ENCODE measurements at regions of chr15 and their contacts with region 1.

Region 1: GRCh38 chr15:68672781-68673205 is 94.0 kb downstream of the CORO2B start:
- DNase-seq: no peak
- ATAC-seq: no peak
- H3K4me3 ChIP-seq: no peak overlapping the region
- H3K4me3 Mint-ChIP-seq: no peak overlapping the region
- H3K27ac ChIP-seq: no peak overlapping the region
- H3K27ac Mint-ChIP-seq: no peak overlapping the region
- H3K4me1 ChIP-seq: peaks cover 10 to 14% of the 10 kb centered on the region in 2 donors
- H3K4me1 Mint-ChIP-seq: peaks cover 12% of the 10 kb centered on the region
- H3K27me3 ChIP-seq: peaks cover 0 to 12% (median 0%) of the 10 kb centered on the region in 4 experiments
- H3K27me3 Mint-ChIP-seq: peaks cover 19% of the 10 kb centered on the region
- CTCF ChIP-seq: no peak

Region 2: DNA sequence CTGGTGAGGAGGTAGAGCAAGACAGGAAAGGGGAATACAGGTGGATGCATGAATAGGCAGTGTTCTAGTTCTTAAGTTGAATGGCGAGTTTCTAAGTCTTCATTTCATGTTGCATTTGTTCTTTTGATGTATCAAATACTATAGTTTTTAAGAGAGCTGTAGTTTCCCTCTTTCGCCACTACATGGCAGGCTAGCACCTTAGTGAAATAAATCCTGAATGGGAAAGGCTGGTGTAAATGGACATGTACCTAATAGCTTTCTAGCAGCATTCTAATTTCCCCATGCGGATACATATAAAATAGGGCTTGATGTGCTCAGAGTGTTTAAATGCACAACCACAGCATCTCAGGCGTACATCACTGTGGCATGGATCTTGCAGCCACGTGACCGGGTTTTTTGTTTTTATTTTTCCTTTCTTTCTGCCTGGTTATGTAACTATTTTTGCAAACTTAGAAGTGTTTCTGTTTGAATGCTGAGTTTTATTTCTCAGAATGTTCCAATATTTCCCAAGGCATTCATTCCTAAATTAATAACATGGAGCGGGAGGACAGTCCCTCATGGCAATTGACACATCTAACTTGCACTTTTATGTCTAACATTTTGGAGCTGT is 419.8 kb before region 1 on chr15:
- CTCF ChIA-PET with region 1: interaction called, 16 read pairs
- POLR2A ChIA-PET with region 1: no interaction called
- intact Hi-C with region 1: loop called (anchors 2 kb)
- DNase-seq: peak; percentile 62
- ATAC-seq: peak; percentile 65
- H3K4me3 ChIP-seq: no peak overlapping the region
- H3K4me3 Mint-ChIP-seq: no peak overlapping the region
- H3K27ac ChIP-seq: no peak overlapping the region
- H3K27ac Mint-ChIP-seq: no peak overlapping the region
- H3K4me1 ChIP-seq: peaks cover 10 to 12% of the 10 kb centered on the region in 2 donors
- H3K4me1 Mint-ChIP-seq: peaks cover 4% of the 10 kb centered on the region
- H3K27me3 ChIP-seq: peaks cover 0 to 17% (median 6%) of the 10 kb centered on the region in 4 experiments
- H3K27me3 Mint-ChIP-seq: peaks cover 17% of the 10 kb centered on the region
- CTCF ChIP-seq: peak; percentile 91

Region 3: GRCh38 chr15:68550481-68551295 is 122.1 kb before region 1 on chr15:
- CTCF ChIA-PET with region 1: interaction called, 409 read pairs
- POLR2A ChIA-PET with region 1: no interaction called
- intact Hi-C with region 1: loop called (anchors 1 kb)
- DNase-seq: peak; percentile 80
- ATAC-seq: peak; percentile 58
- H3K4me3 ChIP-seq: no peak overlapping the region
- H3K4me3 Mint-ChIP-seq: no peak overlapping the region
- H3K27ac ChIP-seq: no peak overlapping the region
- H3K27ac Mint-ChIP-seq: no peak overlapping the region
- H3K4me1 ChIP-seq: no peaks in the 10 kb centered on the region
- H3K4me1 Mint-ChIP-seq: no peaks in the 10 kb centered on the region
- H3K27me3 ChIP-seq: peaks cover 0 to 25% (median 12%) of the 10 kb centered on the region in 4 experiments
- H3K27me3 Mint-ChIP-seq: peaks cover 46% of the 10 kb centered on the region
- CTCF ChIP-seq: peak; percentile 92

Region 4: DNA sequence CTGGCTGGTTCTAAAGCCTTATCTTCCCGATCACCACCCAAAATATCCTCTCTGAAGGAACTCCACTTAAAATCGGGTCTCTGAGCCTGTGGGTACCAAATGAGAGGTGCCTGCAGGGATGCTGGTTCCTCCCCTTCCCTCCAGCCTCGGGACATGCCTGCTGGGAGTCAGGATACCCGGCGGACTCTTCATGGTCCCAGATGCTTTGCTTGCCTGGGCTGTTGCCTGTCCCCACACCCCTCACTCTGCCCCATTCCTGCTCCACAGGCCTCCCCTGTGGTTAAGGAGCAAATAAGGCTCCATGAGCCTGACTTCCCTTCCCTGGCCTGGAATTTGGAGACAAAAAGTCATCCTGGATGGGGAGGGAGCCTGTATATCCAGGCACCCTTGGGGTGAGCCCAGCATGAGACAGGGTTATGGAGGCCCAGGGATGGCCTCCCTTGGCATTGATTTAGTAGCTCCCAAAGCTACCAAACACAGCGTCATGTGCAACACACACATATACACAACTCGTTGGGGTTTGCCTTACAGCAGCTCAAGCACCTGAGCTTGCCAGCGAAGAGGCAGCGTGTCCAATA is 106.3 kb before region 1 on chr15:
- CTCF ChIA-PET with region 1: interaction called, 178 read pairs
- POLR2A ChIA-PET with region 1: no interaction called
- intact Hi-C with region 1: no loop called
- DNase-seq: no peak
- ATAC-seq: no peak
- H3K4me3 ChIP-seq: no peak overlapping the region
- H3K4me3 Mint-ChIP-seq: no peak overlapping the region
- H3K27ac ChIP-seq: no peak overlapping the region
- H3K27ac Mint-ChIP-seq: no peak overlapping the region
- H3K4me1 ChIP-seq: peaks cover 4 to 5% of the 10 kb centered on the region in 2 donors
- H3K4me1 Mint-ChIP-seq: peaks cover 4% of the 10 kb centered on the region
- H3K27me3 ChIP-seq: peaks cover 0 to 13% (median 2%) of the 10 kb centered on the region in 4 experiments
- H3K27me3 Mint-ChIP-seq: peaks cover 28% of the 10 kb centered on the region
- CTCF ChIP-seq: no peak

Region 5: DNA sequence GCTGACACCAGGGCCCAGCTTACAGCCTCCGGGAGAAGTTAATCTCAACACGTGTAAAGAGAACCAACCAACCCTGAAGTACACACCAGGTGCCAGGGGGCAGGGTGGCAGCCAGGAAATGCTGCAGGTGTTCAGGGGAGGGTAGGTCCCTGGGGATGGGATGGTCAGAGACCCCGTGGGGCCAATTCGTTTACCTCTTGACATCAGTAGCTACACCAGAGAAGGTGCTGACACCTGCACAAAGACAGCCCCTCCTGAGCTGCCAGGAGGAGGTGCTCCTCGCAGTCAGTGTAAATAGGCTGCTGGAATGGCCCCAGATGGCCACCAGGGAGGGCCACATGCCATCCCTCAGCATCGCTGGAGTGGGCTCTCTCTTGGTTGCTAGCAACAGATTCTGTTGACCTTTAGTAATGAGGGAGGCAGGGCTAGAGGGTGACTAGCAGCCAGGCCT is 41.2 kb before region 1 on chr15:
- CTCF ChIA-PET with region 1: interaction called, 117 read pairs
- POLR2A ChIA-PET with region 1: interaction called, 5 read pairs
- intact Hi-C with region 1: loop called (anchors 2 kb)
- DNase-seq: peak; percentile 90
- ATAC-seq: peak; percentile 81
- H3K4me3 ChIP-seq: no peak overlapping the region
- H3K4me3 Mint-ChIP-seq: peak overlapping the region; percentile 80
- H3K27ac ChIP-seq: peak overlapping the region; percentile 86 to 95
- H3K27ac Mint-ChIP-seq: peak overlapping the region; percentile 97
- H3K4me1 ChIP-seq: peaks cover 96 to 98% of the 10 kb centered on the region in 2 donors
- H3K4me1 Mint-ChIP-seq: peaks cover 98% of the 10 kb centered on the region
- H3K27me3 ChIP-seq: no peaks in the 10 kb centered on the region
- H3K27me3 Mint-ChIP-seq: peaks cover 9% of the 10 kb centered on the region
- CTCF ChIP-seq: peak; percentile 21

Region 6: GRCh38 chr15:68650901-68651709 is 21.7 kb before region 1 on chr15:
- CTCF ChIA-PET with region 1: interaction called, 37 read pairs
- POLR2A ChIA-PET with region 1: no interaction called
- intact Hi-C with region 1: no loop called
- DNase-seq: peak; percentile 65
- ATAC-seq: peak; percentile 58
- H3K4me3 ChIP-seq: no peak overlapping the region
- H3K4me3 Mint-ChIP-seq: no peak overlapping the region
- H3K27ac ChIP-seq: no peak overlapping the region
- H3K27ac Mint-ChIP-seq: no peak overlapping the region
- H3K4me1 ChIP-seq: no peaks in the 10 kb centered on the region
- H3K4me1 Mint-ChIP-seq: no peaks in the 10 kb centered on the region
- H3K27me3 ChIP-seq: peaks cover 0 to 6% (median 0%) of the 10 kb centered on the region in 4 experiments
- H3K27me3 Mint-ChIP-seq: peaks cover 8% of the 10 kb centered on the region
- CTCF ChIP-seq: peak; percentile 77

Region 7: GRCh38 chr15:68732471-68732870 is 59.7 kb after region 1 on chr15:
- CTCF ChIA-PET with region 1: no interaction called
- POLR2A ChIA-PET with region 1: no interaction called
- intact Hi-C with region 1: no loop called
- DNase-seq: no peak
- ATAC-seq: no peak
- H3K4me3 ChIP-seq: no peak overlapping the region
- H3K4me3 Mint-ChIP-seq: no peak overlapping the region
- H3K27ac ChIP-seq: no peak overlapping the region
- H3K27ac Mint-ChIP-seq: no peak overlapping the region
- H3K4me1 ChIP-seq: peaks cover 24 to 34% of the 10 kb centered on the region in 2 donors
- H3K4me1 Mint-ChIP-seq: peaks cover 32% of the 10 kb centered on the region
- H3K27me3 ChIP-seq: no peaks in the 10 kb centered on the region
- H3K27me3 Mint-ChIP-seq: no peaks in the 10 kb centered on the region
- CTCF ChIP-seq: no peak

Region 8: DNA sequence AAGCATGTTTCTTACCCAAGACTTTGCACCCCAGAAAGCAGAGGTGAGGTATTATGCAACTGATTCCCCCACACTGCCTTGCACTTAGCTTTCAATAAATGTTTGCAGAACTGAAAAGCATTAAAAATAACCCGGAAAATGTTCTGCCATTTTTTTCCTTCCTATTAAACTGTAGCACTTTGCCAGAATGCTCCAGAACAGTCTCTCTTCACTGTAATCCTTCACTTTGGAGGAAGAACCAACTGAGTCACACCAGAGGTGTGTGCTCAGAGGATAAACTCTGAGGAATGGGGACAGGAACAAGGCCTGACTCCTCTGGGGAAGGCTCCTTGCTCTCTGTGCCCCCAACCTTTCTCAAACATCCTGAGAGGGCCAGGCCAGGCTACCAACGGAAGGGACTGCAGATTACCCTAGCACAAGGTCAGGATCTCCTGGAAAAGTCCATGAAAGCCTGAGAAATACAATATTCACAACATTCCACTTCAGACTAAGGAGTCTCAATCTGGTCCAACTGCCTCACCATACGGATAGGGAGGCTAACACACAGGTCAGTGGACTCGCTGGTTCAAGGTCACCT is 128.9 kb after region 1 on chr15:
- CTCF ChIA-PET with region 1: no interaction called
- POLR2A ChIA-PET with region 1: no interaction called
- intact Hi-C with region 1: no loop called
- DNase-seq: no peak
- ATAC-seq: no peak
- H3K4me3 ChIP-seq: no peak overlapping the region
- H3K4me3 Mint-ChIP-seq: no peak overlapping the region
- H3K27ac ChIP-seq: peak overlapping the region in 1 of 2 donors; percentile 37
- H3K27ac Mint-ChIP-seq: no peak overlapping the region
- H3K4me1 ChIP-seq: peaks cover 15 to 35% of the 10 kb centered on the region in 2 donors
- H3K4me1 Mint-ChIP-seq: peaks cover 84% of the 10 kb centered on the region
- H3K27me3 ChIP-seq: no peaks in the 10 kb centered on the region
- H3K27me3 Mint-ChIP-seq: no peaks in the 10 kb centered on the region
- CTCF ChIP-seq: no peak

Region 9: DNA sequence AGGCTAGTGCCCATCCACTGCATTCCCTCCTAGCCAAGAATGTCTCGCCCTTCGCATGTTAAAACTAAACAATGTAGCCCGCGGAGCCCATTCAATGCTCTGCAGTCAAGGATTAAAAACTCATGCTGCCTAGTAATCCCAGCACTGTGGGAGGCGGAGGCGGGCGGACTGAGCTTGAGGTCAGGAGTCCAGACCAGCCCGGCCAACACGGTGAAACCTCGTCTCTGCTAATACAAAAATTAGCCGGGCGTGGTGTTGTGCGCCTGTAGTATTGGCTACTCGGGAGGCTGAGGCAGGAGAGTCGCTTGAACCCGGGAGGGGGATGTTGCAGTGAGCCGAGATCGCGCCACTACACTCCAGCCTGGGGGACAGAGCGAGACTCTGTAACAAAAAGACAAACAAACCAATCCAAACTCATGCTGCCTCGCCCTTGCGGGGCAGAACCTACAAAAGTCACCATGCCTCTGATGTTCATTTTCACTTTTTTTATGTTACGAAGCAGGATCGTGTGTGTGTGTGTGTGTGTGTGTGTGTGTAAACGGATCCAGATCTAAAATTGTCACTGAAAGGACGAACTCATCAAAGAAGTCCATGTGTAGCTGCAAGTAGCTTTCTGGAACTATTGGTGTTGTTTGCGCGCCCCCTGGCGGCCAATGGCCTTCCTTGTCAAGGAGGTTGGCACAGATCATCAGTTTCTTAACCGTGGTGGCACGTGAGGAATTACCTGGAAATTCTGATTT is 202.8 kb after region 1 on chr15:
- CTCF ChIA-PET with region 1: interaction called, 54 read pairs
- POLR2A ChIA-PET with region 1: no interaction called
- intact Hi-C with region 1: loop called (anchors 1 kb)
- DNase-seq: peak; percentile 90
- ATAC-seq: peak; percentile 75
- H3K4me3 ChIP-seq: no peak overlapping the region
- H3K4me3 Mint-ChIP-seq: peak overlapping the region; percentile 50
- H3K27ac ChIP-seq: no peak overlapping the region
- H3K27ac Mint-ChIP-seq: no peak overlapping the region
- H3K4me1 ChIP-seq: peaks cover 4% of the 10 kb centered on the region in 2 donors
- H3K4me1 Mint-ChIP-seq: peaks cover 3% of the 10 kb centered on the region
- H3K27me3 ChIP-seq: peaks cover 0 to 16% (median 8%) of the 10 kb centered on the region in 4 experiments
- H3K27me3 Mint-ChIP-seq: peaks cover 19% of the 10 kb centered on the region
- CTCF ChIP-seq: peak; percentile 85

Region 10: DNA sequence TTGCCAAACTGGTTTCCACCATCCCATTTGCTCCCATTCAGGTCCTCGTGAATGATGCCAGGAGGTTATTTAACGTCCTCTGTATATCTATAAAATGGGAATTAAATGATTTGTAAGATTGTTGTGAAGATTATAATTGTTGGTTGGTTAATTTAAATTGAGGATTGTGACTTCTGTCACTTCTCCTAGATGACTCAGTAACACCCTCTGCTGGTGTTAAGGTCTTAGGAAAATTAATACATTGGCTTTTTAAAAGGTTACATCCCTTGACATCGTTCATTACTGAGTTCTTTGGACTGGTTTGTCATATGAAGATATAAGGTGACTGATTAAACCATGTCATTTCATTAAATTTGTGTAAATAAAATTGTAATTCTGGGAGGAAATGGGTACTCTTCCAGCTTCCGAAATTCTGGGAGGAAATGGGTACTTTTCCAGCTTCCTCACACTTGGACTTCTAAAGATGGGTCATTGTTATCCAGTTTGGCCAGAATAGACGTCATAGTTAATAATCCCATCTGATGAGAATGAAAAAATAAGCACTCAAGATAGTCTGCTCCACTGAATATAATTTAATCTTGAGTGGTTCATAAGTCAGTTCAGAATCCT is 592.7 kb after region 1 on chr15:
- CTCF ChIA-PET with region 1: no interaction called
- POLR2A ChIA-PET with region 1: no interaction called
- intact Hi-C with region 1: no loop called
- DNase-seq: peak; percentile 16
- ATAC-seq: no peak
- H3K4me3 ChIP-seq: no peak overlapping the region
- H3K4me3 Mint-ChIP-seq: no peak overlapping the region
- H3K27ac ChIP-seq: no peak overlapping the region
- H3K27ac Mint-ChIP-seq: no peak overlapping the region
- H3K4me1 ChIP-seq: no peaks in the 10 kb centered on the region
- H3K4me1 Mint-ChIP-seq: no peaks in the 10 kb centered on the region
- H3K27me3 ChIP-seq: no peaks in the 10 kb centered on the region
- H3K27me3 Mint-ChIP-seq: no peaks in the 10 kb centered on the region
- CTCF ChIP-seq: peak; percentile 34